PC-9 (cell line): ENCODE measurements at regions of chr11 and their contacts with region 1.

Region 1: GRCh38 chr11:26621141-26621540 is 49.1 kb upstream of the MUC15 start:
- DNase-seq: peak; percentile 21 to 84
- H3K4me3 ChIP-seq: no peak overlapping the region
- H3K27ac ChIP-seq: peak overlapping the region; percentile 48
- H3K4me1 ChIP-seq: peaks cover 16% of the 10 kb centered on the region
- H3K27me3 ChIP-seq: no peaks in the 10 kb centered on the region
- CTCF ChIP-seq: no peak

Region 2: GRCh38 chr11:26556581-26556980 is 64.6 kb before region 1 on chr11:
- CTCF ChIA-PET with region 1: no interaction called
- POLR2A ChIA-PET with region 1: no interaction called
- intact Hi-C with region 1: loop called (anchors 1 kb)
- DNase-seq: peak; percentile 22 to 68
- H3K4me3 ChIP-seq: no peak overlapping the region
- H3K27ac ChIP-seq: peak overlapping the region; percentile 55
- H3K4me1 ChIP-seq: peaks cover 12% of the 10 kb centered on the region
- H3K27me3 ChIP-seq: no peaks in the 10 kb centered on the region
- CTCF ChIP-seq: no peak

Region 3: GRCh38 chr11:26583538-26583937 is 37.6 kb before region 1 on chr11:
- CTCF ChIA-PET with region 1: no interaction called
- POLR2A ChIA-PET with region 1: no interaction called
- intact Hi-C with region 1: loop called (anchors 5 kb)
- DNase-seq: peak; percentile 38 to 82
- H3K4me3 ChIP-seq: no peak overlapping the region
- H3K27ac ChIP-seq: no peak overlapping the region
- H3K4me1 ChIP-seq: peaks cover 54% of the 10 kb centered on the region
- H3K27me3 ChIP-seq: no peaks in the 10 kb centered on the region
- CTCF ChIP-seq: no peak

Region 4: GRCh38 chr11:27456140-27456794 is 835.1 kb after region 1 on chr11:
- CTCF ChIA-PET with region 1: no interaction called
- POLR2A ChIA-PET with region 1: interaction called, 11 read pairs
- intact Hi-C with region 1: no loop called
- DNase-seq: peak in 1 of 2 experiments; percentile 67
- H3K4me3 ChIP-seq: no peak overlapping the region
- H3K27ac ChIP-seq: peak overlapping the region; percentile 55
- H3K4me1 ChIP-seq: peaks cover 55% of the 10 kb centered on the region
- H3K27me3 ChIP-seq: no peaks in the 10 kb centered on the region
- CTCF ChIP-seq: no peak